ENCODE measurements at regions of chr3 and their contacts with region 1.

Region 1: DNA sequence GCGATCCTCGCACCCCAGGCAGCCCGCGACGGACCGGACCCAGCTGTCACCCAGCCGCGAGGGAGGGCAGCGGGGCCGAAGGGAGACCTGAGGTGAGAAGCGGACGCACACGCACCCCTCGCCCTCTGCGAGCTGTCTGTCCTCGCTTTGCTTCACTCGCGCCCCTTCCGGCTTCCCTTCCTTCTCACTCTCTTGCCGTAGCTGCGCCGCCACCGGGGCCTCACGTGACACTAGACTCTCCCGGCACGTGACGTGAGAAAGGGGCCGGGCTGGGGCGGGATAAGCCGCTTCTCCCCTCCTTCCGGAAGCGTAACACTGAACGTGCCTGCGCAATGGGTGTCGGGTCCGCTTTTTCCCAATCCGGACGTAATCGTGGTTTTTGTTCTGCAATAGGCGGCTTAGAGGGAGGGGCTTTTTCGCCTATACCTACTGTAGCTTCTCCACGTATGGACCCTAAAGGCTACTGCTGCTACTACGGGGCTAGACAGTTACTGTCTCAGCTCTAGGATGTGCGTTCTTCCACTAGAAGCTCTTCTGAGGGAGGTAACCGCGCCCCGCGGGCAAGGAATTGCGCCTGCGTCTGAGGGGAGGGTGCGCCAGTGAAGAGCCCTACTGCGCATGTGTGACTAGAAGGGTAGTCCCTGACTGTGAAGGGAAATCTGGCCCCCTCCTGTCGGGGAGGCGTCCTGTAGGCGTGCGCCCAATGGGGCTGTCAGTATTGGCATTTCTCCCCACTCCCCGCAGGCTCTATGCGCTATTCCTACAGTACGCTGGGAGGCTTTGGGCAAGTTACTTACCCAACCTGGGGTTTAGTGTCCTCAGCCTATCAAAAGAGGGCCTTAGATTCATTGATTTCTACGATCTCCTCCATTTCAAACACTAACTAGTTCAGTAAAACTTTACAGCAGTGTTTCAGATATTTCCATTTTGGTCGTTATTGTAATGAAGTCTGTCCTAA is at the starts of genes ATG3 and SLC35A5:
- DNase-seq: peak; percentile 97 to 100 (median 99)
- ATAC-seq: peak; percentile 88
- H3K4me3 ChIP-seq: peak within 1 kb of the TSS; percentile 86
- H3K4me3 Mint-ChIP-seq: peak within 1 kb of the TSS; percentile 93 to 100 (median 98)
- H3K27ac ChIP-seq: peak within 1 kb of the TSS; percentile 91
- H3K27ac Mint-ChIP-seq: peak within 1 kb of the TSS; percentile 96 to 100 (median 99)
- H3K4me1 ChIP-seq: peaks cover 13 to 15% of the 10 kb centered on the region in 2 donors
- H3K4me1 Mint-ChIP-seq: peaks cover 25 to 73% (median 58%) of the 10 kb centered on the region in 7 donors
- H3K27me3 ChIP-seq: no peaks in the 10 kb centered on the region
- H3K27me3 Mint-ChIP-seq: no peaks in the 10 kb centered on the region
- total RNA-seq, gene ATG3: 35.1 to 65.8 (median 50.3) TPM
- total RNA-seq, gene SLC35A5: 10.4 to 24.6 (median 20.8) TPM

Region 2: DNA sequence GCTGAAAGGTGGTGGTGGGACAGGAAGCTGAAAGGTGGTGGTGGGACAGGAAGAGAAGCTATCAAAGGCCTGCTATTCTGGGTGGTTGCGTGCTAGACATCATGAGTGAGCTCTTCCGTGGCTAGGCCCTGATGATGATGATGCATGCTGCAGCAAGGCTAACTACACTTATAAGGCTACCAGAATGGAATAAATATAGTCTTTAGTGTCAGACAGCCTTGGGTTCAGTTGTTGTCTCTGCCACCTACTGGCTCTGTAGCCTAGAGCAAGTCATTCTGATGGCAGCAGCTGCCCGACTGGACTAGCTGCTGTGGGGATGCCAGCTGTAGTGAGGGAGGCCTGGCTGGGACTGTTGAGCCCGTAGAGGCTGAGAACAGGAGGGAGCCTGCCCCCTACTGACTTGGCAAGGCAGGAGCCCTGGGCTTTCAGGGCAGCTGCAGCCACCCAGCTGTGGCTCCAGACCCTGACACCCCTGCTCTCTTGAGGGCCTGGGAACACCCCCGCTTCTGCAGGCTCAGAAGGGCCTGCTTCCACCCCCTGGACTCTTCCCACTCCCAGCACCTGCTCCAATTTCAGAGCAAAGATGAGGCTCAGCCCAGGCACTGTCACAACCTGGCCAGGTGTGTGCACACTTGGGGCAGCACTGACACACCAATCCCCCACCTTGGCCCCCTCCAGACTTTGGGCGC is 945.4 kb before region 1 on chr3:
- CTCF ChIA-PET with region 1: no interaction called
- POLR2A ChIA-PET with region 1: no interaction called
- intact Hi-C with region 1: loop called in 1 of 2 experiments (anchors 10 kb)
- DNase-seq: peak in 8 of 9 donors; percentile 40 to 71 (median 66)
- ATAC-seq: peak; percentile 92
- H3K4me3 ChIP-seq: no peak overlapping the region
- H3K4me3 Mint-ChIP-seq: peak overlapping the region; percentile 2 to 64 (median 39)
- H3K27ac ChIP-seq: peak overlapping the region; percentile 43
- H3K27ac Mint-ChIP-seq: peak overlapping the region; percentile 52 to 95 (median 78)
- H3K4me1 ChIP-seq: peaks cover 21 to 32% of the 10 kb centered on the region in 2 donors
- H3K4me1 Mint-ChIP-seq: peaks cover 30 to 71% (median 58%) of the 10 kb centered on the region in 7 donors
- H3K27me3 ChIP-seq: no peaks in the 10 kb centered on the region
- H3K27me3 Mint-ChIP-seq: no peaks in the 10 kb centered on the region

Region 3: DNA sequence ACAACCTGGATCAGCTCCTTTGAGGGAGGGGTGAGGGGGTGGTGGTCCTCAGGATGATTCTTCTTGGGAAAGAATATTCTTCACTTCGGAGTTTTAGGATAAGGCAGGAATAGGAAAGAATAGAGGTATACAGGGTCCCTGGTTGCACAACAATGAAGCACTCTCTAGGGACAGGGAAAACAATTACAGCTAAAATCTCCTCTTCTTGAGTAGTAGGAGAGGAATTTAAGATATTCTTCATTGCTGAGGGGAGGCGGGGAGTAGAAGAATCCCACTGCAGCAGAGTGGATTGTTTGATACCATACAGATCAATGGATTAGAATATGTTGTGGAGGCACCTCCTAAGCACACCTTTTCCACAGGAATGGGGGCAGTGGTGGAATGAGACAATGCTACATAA is 288.5 kb before region 1 on chr3:
- CTCF ChIA-PET with region 1: no interaction called
- POLR2A ChIA-PET with region 1: no interaction called
- intact Hi-C with region 1: no loop called
- DNase-seq: no peak
- ATAC-seq: no peak
- H3K4me3 ChIP-seq: no peak overlapping the region
- H3K4me3 Mint-ChIP-seq: no peak overlapping the region
- H3K27ac ChIP-seq: no peak overlapping the region
- H3K27ac Mint-ChIP-seq: no peak overlapping the region
- H3K4me1 ChIP-seq: no peaks in the 10 kb centered on the region
- H3K4me1 Mint-ChIP-seq: no peaks in the 10 kb centered on the region
- H3K27me3 ChIP-seq: no peaks in the 10 kb centered on the region
- H3K27me3 Mint-ChIP-seq: peaks cover 0 to 28% (median 7%) of the 10 kb centered on the region in 5 donors

Region 4: GRCh38 chr3:112303764-112304325 is 258.2 kb before region 1 on chr3:
- CTCF ChIA-PET with region 1: no interaction called
- POLR2A ChIA-PET with region 1: interaction called, 3 read pairs
- intact Hi-C with region 1: loop called in 1 of 2 experiments (anchors 1 kb)
- DNase-seq: peak in 7 of 9 donors; percentile 34 to 59 (median 43)
- ATAC-seq: peak; percentile 75
- H3K4me3 ChIP-seq: peak overlapping the region; percentile 82
- H3K4me3 Mint-ChIP-seq: no peak overlapping the region
- H3K27ac ChIP-seq: peak overlapping the region; percentile 61
- H3K27ac Mint-ChIP-seq: no peak overlapping the region
- H3K4me1 ChIP-seq: peaks cover 5 to 18% of the 10 kb centered on the region in 2 donors
- H3K4me1 Mint-ChIP-seq: peaks cover 0 to 3% (median under 1%) of the 10 kb centered on the region in 7 donors
- H3K27me3 ChIP-seq: no peaks in the 10 kb centered on the region
- H3K27me3 Mint-ChIP-seq: no peaks in the 10 kb centered on the region

Region 5: GRCh38 chr3:112582244-112582874 is 20.3 kb after region 1 on chr3:
- CTCF ChIA-PET with region 1: no interaction called
- POLR2A ChIA-PET with region 1: interaction called, 5 read pairs
- intact Hi-C with region 1: loop called in 1 of 2 experiments (anchors 2 kb)
- DNase-seq: peak in 5 of 9 donors; percentile 8 to 39 (median 22)
- ATAC-seq: peak; percentile 60
- H3K4me3 ChIP-seq: no peak overlapping the region
- H3K4me3 Mint-ChIP-seq: no peak overlapping the region
- H3K27ac ChIP-seq: no peak overlapping the region
- H3K27ac Mint-ChIP-seq: no peak overlapping the region
- H3K4me1 ChIP-seq: no peaks in the 10 kb centered on the region
- H3K4me1 Mint-ChIP-seq: peaks cover 0 to 4% (median under 1%) of the 10 kb centered on the region in 7 donors
- H3K27me3 ChIP-seq: no peaks in the 10 kb centered on the region
- H3K27me3 Mint-ChIP-seq: no peaks in the 10 kb centered on the region

Region 6: DNA sequence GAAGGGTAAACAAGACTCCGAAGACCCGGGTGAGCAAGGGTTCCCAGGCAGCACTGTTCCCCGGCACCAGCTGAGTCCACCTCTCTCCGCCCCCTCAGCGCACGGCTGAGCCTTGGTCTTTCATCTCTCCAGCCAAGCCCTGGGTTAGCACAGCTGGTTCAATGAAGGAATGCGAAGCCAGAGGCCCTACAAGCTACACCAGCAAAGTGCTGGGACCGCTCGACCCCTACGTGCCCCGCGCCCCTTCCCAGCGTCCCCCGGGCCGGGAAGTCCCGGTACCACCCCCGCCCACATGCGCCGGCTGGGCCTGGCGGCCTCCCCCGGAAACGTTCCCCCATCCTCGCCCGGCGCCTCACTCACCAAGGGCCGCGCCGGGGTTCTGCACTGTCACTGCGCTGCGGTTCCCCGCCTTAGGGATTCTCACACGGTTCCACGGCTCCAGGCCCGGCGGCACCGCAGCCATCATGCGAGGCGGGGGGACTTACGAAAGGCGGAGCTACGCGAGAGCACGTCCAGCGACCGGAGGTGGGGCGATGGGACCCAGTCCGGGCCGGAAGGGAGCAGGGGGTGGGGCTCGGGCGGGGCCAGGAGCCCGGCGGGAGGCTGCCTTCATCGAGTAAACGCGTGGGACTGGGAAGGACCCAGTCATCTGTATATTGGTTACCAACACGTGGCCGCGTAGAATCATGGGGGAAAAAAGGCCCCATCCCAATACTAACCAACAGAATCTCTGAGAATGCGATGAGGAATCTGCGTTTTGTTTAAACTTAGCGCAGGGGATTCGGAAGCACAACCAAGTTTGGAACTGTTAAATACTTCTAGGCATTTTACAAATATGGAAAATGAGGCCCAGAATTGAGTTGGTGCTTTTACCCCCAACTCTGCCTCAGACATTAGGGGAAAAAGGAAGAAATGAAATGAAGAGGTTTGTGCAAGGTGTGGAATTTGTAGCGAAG is 457.4 kb after region 1 on chr3:
- CTCF ChIA-PET with region 1: no interaction called
- POLR2A ChIA-PET with region 1: no interaction called
- intact Hi-C with region 1: loop called (anchors 1 kb)
- DNase-seq: peak; percentile 69 to 89 (median 74)
- ATAC-seq: peak; percentile 92
- H3K4me3 ChIP-seq: peak overlapping the region; percentile 81
- H3K4me3 Mint-ChIP-seq: peak overlapping the region; percentile 87 to 97 (median 92)
- H3K27ac ChIP-seq: peak overlapping the region; percentile 96
- H3K27ac Mint-ChIP-seq: peak overlapping the region; percentile 87 to 96 (median 91)
- H3K4me1 ChIP-seq: peaks cover 19 to 21% of the 10 kb centered on the region in 2 donors
- H3K4me1 Mint-ChIP-seq: peaks cover 44 to 87% (median 71%) of the 10 kb centered on the region in 7 donors
- H3K27me3 ChIP-seq: no peaks in the 10 kb centered on the region
- H3K27me3 Mint-ChIP-seq: no peaks in the 10 kb centered on the region

Region 7: DNA sequence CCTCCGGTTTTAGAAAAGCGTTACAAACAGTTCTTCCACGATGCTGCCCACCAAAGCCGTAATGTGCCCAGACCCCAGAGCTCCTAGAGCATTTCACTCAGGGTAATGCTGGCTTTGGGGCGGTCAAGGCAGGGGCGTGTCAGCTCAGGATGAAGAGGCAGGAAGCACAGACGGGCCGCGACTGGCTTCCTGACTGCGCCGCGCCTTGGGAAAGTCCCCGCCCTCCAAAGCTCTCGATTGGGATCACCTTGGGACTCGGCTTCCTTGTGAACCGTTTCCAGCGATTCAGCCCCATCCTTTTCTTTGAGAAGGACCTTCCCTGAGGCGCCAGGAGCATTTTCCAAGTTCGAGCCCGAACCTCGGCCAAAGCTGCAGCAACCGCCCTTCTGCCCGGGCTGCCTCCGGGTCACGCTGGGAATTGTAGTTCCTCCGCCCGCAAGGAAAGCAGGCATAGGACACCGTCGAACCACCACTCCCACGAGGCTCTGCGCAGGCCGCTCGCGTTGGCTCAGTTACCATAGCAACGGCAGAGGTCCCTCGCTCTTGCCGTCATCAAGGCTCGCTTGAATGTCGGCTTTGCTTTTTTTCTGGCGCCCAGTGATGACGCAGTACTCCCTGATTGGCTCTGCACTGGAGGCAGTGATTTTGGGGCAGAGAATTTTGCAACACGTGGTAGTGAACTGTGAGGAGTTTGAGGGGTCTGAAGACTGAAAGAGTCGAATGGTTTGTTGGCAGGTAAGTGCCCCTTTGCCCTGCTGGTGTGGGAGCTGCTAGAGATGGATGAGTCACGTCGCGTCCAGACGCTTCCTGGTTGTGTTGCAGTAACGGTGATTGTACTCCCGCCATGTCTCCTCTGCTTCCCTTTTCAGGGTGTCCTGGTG is 1494.4 kb after region 1 on chr3 and contains the starts of genes CCDC191 and QTRT2:
- CTCF ChIA-PET with region 1: no interaction called
- POLR2A ChIA-PET with region 1: no interaction called
- intact Hi-C with region 1: loop called (anchors 1 to 2 kb)
- DNase-seq: peak; percentile 82 to 99 (median 98)
- ATAC-seq: peak; percentile 97
- H3K4me3 ChIP-seq: peak within 1 kb of the TSS; percentile 95
- H3K4me3 Mint-ChIP-seq: peak within 1 kb of the TSS; percentile 91 to 100 (median 98)
- H3K27ac ChIP-seq: peak within 1 kb of the TSS; percentile 91
- H3K27ac Mint-ChIP-seq: peak within 1 kb of the TSS; percentile 87 to 99 (median 97)
- H3K4me1 ChIP-seq: peaks cover 10 to 12% of the 10 kb centered on the region in 2 donors
- H3K4me1 Mint-ChIP-seq: peaks cover 24 to 60% (median 55%) of the 10 kb centered on the region in 7 donors
- H3K27me3 ChIP-seq: no peaks in the 10 kb centered on the region
- H3K27me3 Mint-ChIP-seq: peaks cover 0 to 2% (median 0%) of the 10 kb centered on the region in 5 donors
- total RNA-seq, gene CCDC191: 3.9 to 8.8 (median 5.1) TPM
- total RNA-seq, gene QTRT2: 29.9 to 38.8 (median 33.8) TPM

Measured in naive thymus-derived CD4-positive, alpha-beta T cell (primary cell).